Activated B cell treated with CpG ODN at 0.5 μM for 24 hours (primary cell): ENCODE measurements at regions of chr11 and their contacts with region 1.

Region 1: DNA sequence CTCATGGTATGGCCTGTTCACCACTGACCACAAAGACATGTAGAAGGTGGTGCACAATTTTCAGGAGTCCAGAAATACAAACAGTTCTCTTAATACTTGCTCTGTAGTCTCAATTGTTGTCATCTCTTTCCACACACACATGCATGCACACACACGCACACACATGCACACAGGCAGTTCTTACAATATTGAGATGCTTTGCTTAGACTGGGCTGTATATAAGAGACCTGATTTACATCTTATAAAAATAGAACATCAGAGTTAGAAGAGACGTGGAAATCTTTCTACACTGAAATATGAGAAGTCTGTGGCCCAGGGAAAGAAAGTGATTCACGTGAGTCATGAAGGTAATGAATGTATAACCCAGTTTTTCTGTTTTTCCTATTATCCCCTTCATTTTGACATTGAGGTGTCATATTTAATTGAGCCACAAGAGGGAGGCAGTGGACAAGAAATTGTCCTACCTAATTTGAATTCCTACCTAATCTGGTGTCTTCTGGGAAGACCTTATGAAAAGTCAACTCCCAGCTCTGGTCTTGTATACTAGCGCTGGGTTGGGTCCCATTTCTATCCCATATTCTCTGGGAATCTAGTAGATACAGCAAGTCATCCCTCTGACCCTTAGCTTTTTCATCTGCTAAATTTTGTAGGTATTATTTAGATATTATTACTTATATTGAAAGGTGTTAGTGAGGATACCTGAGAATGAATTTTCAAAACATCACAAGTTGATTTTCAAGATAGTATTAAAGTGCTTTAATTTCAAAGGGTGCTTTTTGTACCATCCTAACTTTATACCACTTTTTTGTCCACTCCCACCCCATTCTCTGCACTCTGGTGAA is 14.9 kb upstream of the MS4A4A start:
- DNase-seq: no peak
- ATAC-seq: peak; percentile 76
- H3K4me3 Mint-ChIP-seq: no peak overlapping the region
- H3K27ac Mint-ChIP-seq: no peak overlapping the region
- H3K4me1 Mint-ChIP-seq: peaks cover 11% of the 10 kb centered on the region
- H3K27me3 Mint-ChIP-seq: no peaks in the 10 kb centered on the region
- CTCF ChIP-seq: peak; percentile 65

Region 2: DNA sequence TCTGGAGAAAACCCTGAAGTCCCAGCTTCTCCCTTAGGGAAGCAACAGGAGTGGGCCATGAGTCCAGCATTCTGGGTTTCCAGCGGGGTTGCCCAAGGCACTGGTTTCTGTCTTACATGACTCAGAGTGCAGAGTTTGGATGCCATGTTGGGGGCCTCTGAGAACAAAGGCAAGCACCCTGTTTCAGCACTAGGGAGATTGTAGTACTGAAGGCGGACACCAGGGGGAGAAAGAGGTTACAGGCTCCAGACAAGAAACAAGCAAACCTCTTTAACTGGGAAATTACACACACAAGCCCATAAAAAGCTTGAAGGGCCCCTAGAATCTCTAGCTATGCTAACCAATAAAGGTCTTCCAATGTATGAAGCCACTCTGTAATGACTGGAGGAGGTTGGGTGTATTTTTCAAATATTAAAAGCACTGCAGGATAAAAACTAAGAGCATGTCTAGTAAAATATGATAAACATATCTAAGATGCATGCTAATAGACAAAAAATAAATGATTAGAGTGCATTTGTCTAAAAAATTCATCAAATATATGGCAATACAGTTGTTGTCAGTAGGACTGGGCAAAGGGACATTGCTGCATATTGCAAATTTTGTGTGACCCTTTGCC is 68.5 kb after region 1 on chr11:
- CTCF ChIA-PET with region 1: interaction called, 34 read pairs
- POLR2A ChIA-PET with region 1: no interaction called
- intact Hi-C with region 1: no loop called
- DNase-seq: peak; percentile 49
- ATAC-seq: peak; percentile 92
- H3K4me3 Mint-ChIP-seq: no peak overlapping the region
- H3K27ac Mint-ChIP-seq: no peak overlapping the region
- H3K4me1 Mint-ChIP-seq: peaks cover 20% of the 10 kb centered on the region
- H3K27me3 Mint-ChIP-seq: no peaks in the 10 kb centered on the region
- CTCF ChIP-seq: no peak

Region 3: DNA sequence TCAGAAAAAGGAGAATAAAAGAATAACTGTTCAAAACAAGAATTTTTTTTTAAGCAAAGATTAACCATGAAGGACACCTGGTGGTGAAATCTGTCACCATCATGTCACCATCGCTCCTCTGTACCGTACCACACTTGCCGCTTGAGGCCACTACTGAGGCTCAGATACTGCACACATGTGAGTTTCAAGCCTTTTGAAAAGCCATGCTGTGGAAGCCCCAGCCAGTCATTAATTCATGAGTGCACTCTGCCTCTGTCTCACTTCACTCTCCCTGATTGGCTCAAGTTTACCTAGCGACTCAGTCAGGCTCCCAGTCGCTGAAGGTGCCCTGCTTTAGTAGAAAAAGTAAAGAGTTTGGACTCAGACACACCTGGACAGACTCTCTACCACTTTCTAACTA is 220.4 kb after region 1 on chr11:
- CTCF ChIA-PET with region 1: interaction called, 7 read pairs
- POLR2A ChIA-PET with region 1: no interaction called
- intact Hi-C with region 1: loop called (anchors 1 kb)
- DNase-seq: peak; percentile 40
- ATAC-seq: peak; percentile 95
- H3K4me3 Mint-ChIP-seq: peak overlapping the region; percentile 42
- H3K27ac Mint-ChIP-seq: peak overlapping the region; percentile 63
- H3K4me1 Mint-ChIP-seq: peaks cover 55% of the 10 kb centered on the region
- H3K27me3 Mint-ChIP-seq: no peaks in the 10 kb centered on the region
- CTCF ChIP-seq: peak; percentile 44

Region 4: DNA sequence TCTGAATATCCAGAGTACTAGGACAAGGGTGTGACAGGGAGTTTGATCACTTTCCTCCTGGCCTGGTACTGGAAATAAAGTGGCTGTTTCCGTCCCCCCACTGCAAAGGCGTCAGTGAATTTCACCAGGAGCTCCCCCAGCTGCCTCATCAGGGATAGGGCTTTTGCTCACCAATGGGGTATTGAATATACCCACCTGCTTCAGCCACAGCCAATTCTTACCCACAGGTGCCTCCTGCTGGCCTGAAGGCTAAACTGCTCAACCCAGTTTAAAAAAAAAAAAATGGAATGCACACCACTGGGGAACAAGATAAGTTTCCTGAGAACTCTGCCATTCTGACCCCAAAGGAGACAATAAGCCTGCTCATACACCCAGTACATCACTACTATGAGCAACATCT is 368.5 kb after region 1 on chr11:
- CTCF ChIA-PET with region 1: interaction called, 24 read pairs
- POLR2A ChIA-PET with region 1: no interaction called
- intact Hi-C with region 1: loop called (anchors 2 kb)
- DNase-seq: no peak
- ATAC-seq: peak; percentile 59
- H3K4me3 Mint-ChIP-seq: peak overlapping the region; percentile 58
- H3K27ac Mint-ChIP-seq: peak overlapping the region; percentile 78
- H3K4me1 Mint-ChIP-seq: peaks cover 41% of the 10 kb centered on the region
- H3K27me3 Mint-ChIP-seq: peaks cover 5% of the 10 kb centered on the region
- CTCF ChIP-seq: peak; percentile 42

Region 5: DNA sequence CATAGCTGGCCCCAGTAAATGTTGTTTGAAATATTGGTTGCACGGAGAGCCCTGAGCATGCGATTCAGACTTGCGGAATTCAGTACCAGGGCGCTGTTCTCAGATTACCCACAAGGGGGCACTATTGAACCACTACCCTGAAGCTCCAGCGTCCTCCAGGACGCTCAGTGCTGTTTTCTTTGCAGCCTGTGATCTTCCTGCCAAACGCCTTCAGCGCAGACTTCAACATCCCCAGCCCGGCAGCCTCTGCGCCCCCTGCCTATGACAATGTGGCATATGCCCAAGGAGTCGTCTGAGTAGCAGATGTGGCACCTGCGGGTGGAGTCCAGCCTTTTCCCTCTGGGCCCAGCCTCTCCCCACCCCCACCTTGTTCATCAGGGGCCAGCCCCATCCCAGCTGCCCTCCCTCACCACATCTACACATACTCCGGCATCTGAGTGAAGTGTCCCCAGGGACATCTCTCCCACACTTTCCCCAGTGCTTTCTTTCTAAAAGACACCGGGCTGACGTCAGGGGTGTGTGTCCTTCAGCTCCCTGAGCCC is 509.9 kb after region 1 on chr11:
- CTCF ChIA-PET with region 1: no interaction called
- POLR2A ChIA-PET with region 1: no interaction called
- intact Hi-C with region 1: loop called (anchors 5 kb)
- DNase-seq: peak; percentile 64
- ATAC-seq: peak; percentile 94
- H3K4me3 Mint-ChIP-seq: no peak overlapping the region
- H3K27ac Mint-ChIP-seq: no peak overlapping the region
- H3K4me1 Mint-ChIP-seq: peaks cover 11% of the 10 kb centered on the region
- H3K27me3 Mint-ChIP-seq: peaks cover 10% of the 10 kb centered on the region
- CTCF ChIP-seq: peak; percentile 44